B cell (primary cell): ENCODE measurements at regions of chr14 and their contacts with region 1.

Region 1: DNA sequence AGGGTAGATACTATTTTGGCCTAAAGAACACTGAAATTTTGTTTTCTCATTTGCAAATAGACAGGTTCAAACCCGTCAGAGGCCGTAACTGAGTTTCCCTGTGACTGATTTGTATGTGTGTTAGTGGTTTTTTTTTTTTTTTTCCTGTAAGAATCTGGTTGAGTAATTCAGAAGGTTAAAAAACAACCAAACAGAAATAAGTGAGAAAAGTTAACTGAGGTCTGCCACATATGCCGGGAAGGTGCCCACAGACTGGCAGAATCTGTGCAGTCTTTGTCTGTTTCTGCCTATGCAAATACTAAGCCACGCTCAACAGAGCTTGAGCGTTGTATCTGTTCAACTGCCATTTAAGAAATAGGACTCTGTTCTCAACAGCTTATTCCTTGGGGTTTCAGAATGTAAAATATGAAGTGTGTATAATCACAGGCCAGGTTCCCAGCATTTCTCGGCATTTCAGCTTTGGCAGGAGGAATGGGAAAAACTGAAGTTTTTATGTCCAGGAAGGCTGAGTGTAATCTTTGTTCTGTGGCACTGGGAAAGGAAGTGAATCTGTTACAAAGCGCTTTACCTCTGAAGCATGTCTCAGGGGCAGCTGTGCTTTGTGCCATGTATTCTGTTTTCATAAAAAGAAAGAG is 181.9 kb downstream of the PRKCH start:
- DNase-seq: peak; percentile 90
- ATAC-seq: peak; percentile 92
- H3K4me3 ChIP-seq: peak overlapping the region in 4 of 5 experiments; percentile 11 to 55 (median 34)
- H3K4me3 Mint-ChIP-seq: peak overlapping the region; percentile 84
- H3K27ac ChIP-seq: peak overlapping the region; percentile 89 to 91
- H3K27ac Mint-ChIP-seq: peak overlapping the region; percentile 98
- H3K4me1 ChIP-seq: peaks cover 85 to 90% of the 10 kb centered on the region in 2 donors
- H3K4me1 Mint-ChIP-seq: peaks cover 88% of the 10 kb centered on the region
- H3K27me3 ChIP-seq: no peaks in the 10 kb centered on the region
- H3K27me3 Mint-ChIP-seq: no peaks in the 10 kb centered on the region
- CTCF ChIP-seq: no peak

Region 2: DNA sequence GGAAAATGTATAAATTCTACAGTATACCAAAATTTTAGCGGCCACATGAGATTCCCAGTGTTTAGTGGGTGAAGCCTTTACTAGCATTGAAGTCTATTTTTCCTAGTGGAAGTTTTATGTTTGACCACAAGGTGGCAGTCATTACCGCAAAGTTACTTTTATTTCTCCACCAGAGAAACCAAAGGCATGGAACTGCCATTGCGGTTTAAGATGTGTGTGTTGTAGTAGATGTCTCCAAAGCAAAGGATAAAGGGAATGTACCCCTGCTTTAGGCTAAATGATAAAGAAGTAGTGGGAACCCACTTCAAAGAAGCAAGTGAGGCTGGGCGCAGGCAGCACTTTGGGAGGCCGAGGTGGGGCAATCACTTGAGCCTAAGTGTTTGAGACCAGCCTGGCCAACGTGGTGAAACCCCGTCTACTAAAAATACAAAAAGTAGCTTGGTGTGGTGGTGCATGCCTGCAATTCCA is 41.4 kb before region 1 on chr14:
- CTCF ChIA-PET with region 1: interaction called, 11 read pairs
- POLR2A ChIA-PET with region 1: interaction called, 8 read pairs
- intact Hi-C with region 1: loop called (anchors 1 kb)
- DNase-seq: peak; percentile 80
- ATAC-seq: peak; percentile 70
- H3K4me3 ChIP-seq: no peak overlapping the region
- H3K4me3 Mint-ChIP-seq: peak overlapping the region; percentile 21
- H3K27ac ChIP-seq: no peak overlapping the region
- H3K27ac Mint-ChIP-seq: peak overlapping the region; percentile 74
- H3K4me1 ChIP-seq: peaks cover 8 to 18% of the 10 kb centered on the region in 2 donors
- H3K4me1 Mint-ChIP-seq: peaks cover 30% of the 10 kb centered on the region
- H3K27me3 ChIP-seq: no peaks in the 10 kb centered on the region
- H3K27me3 Mint-ChIP-seq: no peaks in the 10 kb centered on the region
- CTCF ChIP-seq: peak; percentile 94

Region 3: DNA sequence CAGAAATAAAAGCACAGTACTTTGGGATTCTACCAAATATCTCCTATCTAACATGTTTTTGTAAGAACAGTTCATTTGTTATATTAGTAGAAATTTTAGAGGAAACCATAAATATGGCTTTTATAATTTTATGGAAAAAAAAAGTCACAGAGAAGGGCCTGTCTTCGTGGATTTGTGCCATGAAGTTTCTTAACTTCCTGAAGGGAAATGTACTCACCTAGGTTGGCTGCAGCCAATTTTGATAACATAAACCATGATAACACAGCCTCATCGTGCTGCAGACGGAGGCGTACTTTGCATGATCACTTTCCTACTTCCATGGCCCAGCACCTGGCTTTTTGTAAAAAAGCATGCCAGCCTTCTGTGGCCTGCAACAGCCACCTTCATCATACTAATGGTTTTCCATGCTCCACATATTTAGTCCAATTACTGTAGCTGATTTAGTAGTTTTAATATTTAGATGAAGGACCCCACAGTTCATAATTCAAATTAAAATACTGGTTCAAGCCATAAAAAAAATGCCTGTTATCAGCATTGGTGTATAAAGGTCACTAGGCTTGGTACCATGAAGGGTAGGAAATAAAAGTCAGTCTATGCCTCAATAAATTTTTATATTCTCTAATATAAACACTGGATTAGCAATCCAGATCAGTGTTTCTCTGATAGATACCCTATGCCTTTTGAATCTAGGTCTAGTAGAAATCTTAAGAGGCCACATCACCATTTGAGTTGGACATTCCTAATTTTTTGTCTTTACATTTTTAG is 28.6 kb after region 1 on chr14:
- CTCF ChIA-PET with region 1: interaction called, 4 read pairs
- POLR2A ChIA-PET with region 1: no interaction called
- intact Hi-C with region 1: loop called (anchors 2 kb)
- DNase-seq: no peak
- ATAC-seq: no peak
- H3K4me3 ChIP-seq: no peak overlapping the region
- H3K4me3 Mint-ChIP-seq: no peak overlapping the region
- H3K27ac ChIP-seq: no peak overlapping the region
- H3K27ac Mint-ChIP-seq: no peak overlapping the region
- H3K4me1 ChIP-seq: peaks cover 0 to 7% of the 10 kb centered on the region in 2 donors
- H3K4me1 Mint-ChIP-seq: peaks cover 15% of the 10 kb centered on the region
- H3K27me3 ChIP-seq: no peaks in the 10 kb centered on the region
- H3K27me3 Mint-ChIP-seq: no peaks in the 10 kb centered on the region
- CTCF ChIP-seq: no peak

Region 4: GRCh38 chr14:61568572-61569131 is 65.4 kb after region 1 on chr14:
- CTCF ChIA-PET with region 1: interaction called, 23 read pairs
- POLR2A ChIA-PET with region 1: interaction called, 25 read pairs
- intact Hi-C with region 1: loop called (anchors 1 kb)
- DNase-seq: peak; percentile 94
- ATAC-seq: peak; percentile 92
- H3K4me3 ChIP-seq: peak overlapping the region; percentile 31 to 58 (median 42)
- H3K4me3 Mint-ChIP-seq: peak overlapping the region; percentile 84
- H3K27ac ChIP-seq: peak overlapping the region; percentile 77 to 91
- H3K27ac Mint-ChIP-seq: peak overlapping the region; percentile 93
- H3K4me1 ChIP-seq: peaks cover 41 to 48% of the 10 kb centered on the region in 2 donors
- H3K4me1 Mint-ChIP-seq: peaks cover 57% of the 10 kb centered on the region
- H3K27me3 ChIP-seq: no peaks in the 10 kb centered on the region
- H3K27me3 Mint-ChIP-seq: no peaks in the 10 kb centered on the region
- CTCF ChIP-seq: peak; percentile 31

Region 5: DNA sequence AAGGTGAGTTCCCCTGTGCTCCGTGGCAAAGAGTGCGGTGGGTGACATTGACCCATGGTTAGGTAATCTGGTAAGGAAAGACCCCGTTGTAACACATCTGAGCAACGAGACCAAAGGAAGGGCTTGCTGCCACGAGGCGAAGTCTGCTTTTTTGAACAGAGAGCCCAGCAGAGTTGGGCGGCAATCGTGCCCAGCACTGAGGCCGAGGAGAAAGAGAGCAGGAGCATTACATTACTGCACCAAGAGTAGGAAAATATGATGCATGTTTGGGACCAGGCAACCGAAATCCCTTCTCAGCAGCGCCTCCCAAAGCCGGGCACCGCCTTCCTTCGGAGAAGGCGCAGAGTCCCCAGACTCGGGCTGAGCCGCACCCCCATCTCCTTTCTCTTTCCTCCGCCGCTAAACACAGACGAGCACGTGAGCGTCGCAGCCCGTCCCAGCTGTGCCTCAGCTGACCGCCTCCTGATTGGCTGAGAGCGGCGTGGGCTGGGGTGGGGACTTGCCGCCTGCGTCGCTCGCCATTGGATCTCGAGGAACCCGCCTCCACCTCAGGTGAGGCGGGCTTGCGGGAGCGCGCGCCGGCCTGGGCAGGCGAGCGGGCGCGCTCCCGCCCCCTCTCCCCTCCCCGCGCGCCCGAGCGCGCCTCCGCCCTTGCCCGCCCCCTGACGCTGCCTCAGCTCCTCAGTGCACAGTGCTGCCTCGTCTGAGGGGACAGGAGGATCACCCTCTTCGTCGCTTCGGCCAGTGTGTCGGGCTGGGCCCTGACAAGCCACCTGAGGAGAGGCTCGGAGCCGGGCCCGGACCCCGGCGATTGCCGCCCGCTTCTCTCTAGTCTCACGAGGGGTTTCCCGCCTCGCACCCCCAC is 191.8 kb after region 1 on chr14 and contains the start of gene HIF1A:
- CTCF ChIA-PET with region 1: interaction called, 13 read pairs
- POLR2A ChIA-PET with region 1: interaction called, 14 read pairs
- intact Hi-C with region 1: loop called (anchors 1 kb)
- DNase-seq: peak; percentile 99
- ATAC-seq: peak; percentile 94
- H3K4me3 ChIP-seq: peak within 1 kb of the TSS; percentile 92 to 98 (median 94)
- H3K4me3 Mint-ChIP-seq: peak within 1 kb of the TSS; percentile 97
- H3K27ac ChIP-seq: peak within 1 kb of the TSS; percentile 92 to 94
- H3K27ac Mint-ChIP-seq: peak within 1 kb of the TSS; percentile 97
- H3K4me1 ChIP-seq: peaks cover 20 to 35% of the 10 kb centered on the region in 2 donors
- H3K4me1 Mint-ChIP-seq: peaks cover 35% of the 10 kb centered on the region
- H3K27me3 ChIP-seq: no peaks in the 10 kb centered on the region
- H3K27me3 Mint-ChIP-seq: no peaks in the 10 kb centered on the region
- CTCF ChIP-seq: no peak
- total RNA-seq, gene HIF1A: 261 and 264 TPM in 2 replicates

Region 6: GRCh38 chr14:62329427-62329826 is 826.1 kb after region 1 on chr14:
- CTCF ChIA-PET with region 1: no interaction called
- POLR2A ChIA-PET with region 1: no interaction called
- intact Hi-C with region 1: no loop called
- DNase-seq: no peak
- ATAC-seq: no peak
- H3K4me3 ChIP-seq: no peak overlapping the region
- H3K4me3 Mint-ChIP-seq: no peak overlapping the region
- H3K27ac ChIP-seq: no peak overlapping the region
- H3K27ac Mint-ChIP-seq: no peak overlapping the region
- H3K4me1 ChIP-seq: no peaks in the 10 kb centered on the region
- H3K4me1 Mint-ChIP-seq: no peaks in the 10 kb centered on the region
- H3K27me3 ChIP-seq: no peaks in the 10 kb centered on the region
- H3K27me3 Mint-ChIP-seq: no peaks in the 10 kb centered on the region
- CTCF ChIP-seq: no peak